CD8-positive, alpha-beta T cell (primary cell): ENCODE measurements at regions of chr13 and their contacts with region 1.

Region 1: DNA sequence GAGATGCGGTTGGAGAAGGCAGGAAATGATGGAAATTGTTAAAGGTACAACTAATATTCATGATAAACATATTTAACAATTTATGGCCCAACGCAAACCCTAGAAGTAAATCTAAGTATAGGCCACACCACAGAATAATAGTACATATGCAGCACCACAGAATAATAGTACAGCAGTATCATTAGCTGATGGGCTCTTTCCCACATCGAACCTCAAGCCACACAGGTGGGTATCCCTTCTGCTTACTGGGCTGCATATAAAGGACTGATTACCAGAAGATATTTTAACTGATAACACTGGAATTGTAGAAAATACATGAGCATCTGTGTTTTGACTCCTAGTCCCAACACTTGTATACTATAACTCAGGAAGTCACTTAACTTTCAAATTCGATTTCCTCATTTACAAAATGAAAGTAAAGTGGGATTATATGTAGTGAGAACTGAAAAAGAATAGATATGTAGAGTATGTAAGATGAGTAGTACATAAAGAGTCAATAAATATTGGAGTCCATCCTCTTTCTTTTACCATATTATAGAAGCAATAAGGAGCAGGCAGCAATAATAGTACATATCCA is 91.5 kb downstream of the TSC22D1 start:
- DNase-seq: peak in 2 of 9 experiments; percentile 2 to 31
- ATAC-seq: no peak
- H3K4me3 ChIP-seq: peak overlapping the region in 1 of 2 experiments; percentile 23
- H3K4me3 Mint-ChIP-seq: peak overlapping the region; percentile 59
- H3K27ac ChIP-seq: peak overlapping the region in 1 of 2 experiments; percentile 5
- H3K27ac Mint-ChIP-seq: peak overlapping the region; percentile 42
- H3K4me1 ChIP-seq: peaks cover 10% of the 10 kb centered on the region
- H3K4me1 Mint-ChIP-seq: peaks cover 13% of the 10 kb centered on the region
- H3K27me3 ChIP-seq: no peaks in the 10 kb centered on the region
- H3K27me3 Mint-ChIP-seq: no peaks in the 10 kb centered on the region
- CTCF ChIP-seq: no peak

Region 2: DNA sequence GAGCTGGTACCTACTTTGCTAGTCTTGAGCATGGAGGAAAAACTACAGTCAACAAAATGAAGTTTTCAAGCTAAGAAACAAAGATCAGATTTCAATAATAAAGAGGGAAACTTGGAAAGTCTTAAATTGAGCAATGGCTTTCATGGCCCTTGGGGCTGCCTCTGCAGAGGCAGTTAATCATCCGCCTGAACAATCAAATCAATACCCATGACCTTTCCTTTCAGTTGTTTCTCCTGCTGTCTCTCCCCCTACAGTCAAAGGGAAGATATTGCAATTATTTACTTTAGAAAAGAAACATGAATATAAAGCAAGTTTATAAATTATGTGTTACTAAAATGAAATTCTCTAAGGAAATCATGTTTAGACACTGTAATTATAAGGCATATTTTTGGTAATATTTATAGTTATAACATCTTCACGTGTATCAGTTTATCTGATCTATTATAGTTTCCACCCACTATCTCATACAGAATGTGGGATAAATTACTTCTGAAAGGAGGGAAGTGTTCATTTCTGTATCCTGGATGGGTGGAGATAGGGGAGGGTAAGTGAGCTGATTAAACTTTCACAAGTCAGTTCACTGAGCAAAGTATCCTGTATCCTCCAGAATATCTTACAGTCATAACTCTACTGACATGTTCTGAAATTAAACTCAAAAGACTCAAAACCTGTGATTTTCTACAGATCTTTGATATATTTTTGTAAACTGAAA is 163.9 kb after region 1 on chr13:
- CTCF ChIA-PET with region 1: interaction called, 14 read pairs
- POLR2A ChIA-PET with region 1: no interaction called
- intact Hi-C with region 1: loop called (anchors 1 to 2 kb)
- DNase-seq: peak in 2 of 9 experiments; percentile 8 to 12
- ATAC-seq: no peak
- H3K4me3 ChIP-seq: no peak overlapping the region
- H3K4me3 Mint-ChIP-seq: no peak overlapping the region
- H3K27ac ChIP-seq: no peak overlapping the region
- H3K27ac Mint-ChIP-seq: no peak overlapping the region
- H3K4me1 ChIP-seq: no peaks in the 10 kb centered on the region
- H3K4me1 Mint-ChIP-seq: no peaks in the 10 kb centered on the region
- H3K27me3 ChIP-seq: no peaks in the 10 kb centered on the region
- H3K27me3 Mint-ChIP-seq: peaks cover 8% of the 10 kb centered on the region
- CTCF ChIP-seq: peak; percentile 51

Region 3: DNA sequence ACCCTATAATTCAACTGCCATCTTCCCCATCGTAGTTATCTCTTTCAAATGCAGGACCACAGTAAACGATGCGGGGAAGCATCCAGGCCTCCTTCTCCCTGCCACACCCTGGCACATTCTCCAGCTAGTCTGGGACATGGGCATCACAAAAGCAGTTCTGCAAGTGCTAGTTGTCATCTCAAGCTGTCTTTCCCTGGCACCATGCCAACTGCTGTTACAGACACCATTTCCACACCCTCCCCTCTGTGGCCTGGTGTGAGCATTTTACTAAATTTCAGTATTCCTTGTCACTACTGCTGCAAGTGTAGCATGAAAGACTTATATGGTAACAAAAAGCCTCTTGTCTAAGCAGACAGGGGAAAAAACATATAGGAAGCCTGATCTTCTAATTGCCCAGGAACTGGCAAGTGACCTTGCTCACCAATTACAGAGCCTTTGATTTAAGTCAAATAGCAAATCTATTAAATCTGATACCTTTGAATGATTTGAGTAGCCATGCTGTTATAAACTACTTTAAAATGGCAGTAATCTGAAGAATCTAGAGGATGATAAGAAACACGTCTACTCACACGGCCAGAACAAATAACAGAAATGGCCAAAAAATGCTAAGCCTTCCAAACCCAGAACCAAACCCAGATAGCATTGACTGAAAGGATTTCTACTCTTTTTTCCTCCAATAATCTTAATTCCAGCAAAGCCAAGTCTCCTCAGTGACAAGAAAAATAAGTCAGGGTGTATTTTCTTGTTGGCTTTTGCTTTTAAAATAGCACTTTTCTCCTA is 325.6 kb after region 1 on chr13:
- CTCF ChIA-PET with region 1: no interaction called
- POLR2A ChIA-PET with region 1: no interaction called
- intact Hi-C with region 1: no loop called
- DNase-seq: peak in 2 of 9 experiments; percentile 7 to 8
- ATAC-seq: no peak
- H3K4me3 ChIP-seq: no peak overlapping the region
- H3K4me3 Mint-ChIP-seq: no peak overlapping the region
- H3K27ac ChIP-seq: no peak overlapping the region
- H3K27ac Mint-ChIP-seq: no peak overlapping the region
- H3K4me1 ChIP-seq: no peaks in the 10 kb centered on the region
- H3K4me1 Mint-ChIP-seq: no peaks in the 10 kb centered on the region
- H3K27me3 ChIP-seq: no peaks in the 10 kb centered on the region
- H3K27me3 Mint-ChIP-seq: peaks cover 1% of the 10 kb centered on the region
- CTCF ChIP-seq: no peak

Region 4: GRCh38 chr13:44879463-44880058 is 394.9 kb after region 1 on chr13:
- CTCF ChIA-PET with region 1: interaction called, 3 read pairs
- POLR2A ChIA-PET with region 1: no interaction called
- intact Hi-C with region 1: loop called (anchors 1 to 5 kb)
- DNase-seq: peak in 2 of 9 experiments; percentile 14 to 31
- ATAC-seq: no peak
- H3K4me3 ChIP-seq: no peak overlapping the region
- H3K4me3 Mint-ChIP-seq: no peak overlapping the region
- H3K27ac ChIP-seq: no peak overlapping the region
- H3K27ac Mint-ChIP-seq: no peak overlapping the region
- H3K4me1 ChIP-seq: no peaks in the 10 kb centered on the region
- H3K4me1 Mint-ChIP-seq: no peaks in the 10 kb centered on the region
- H3K27me3 ChIP-seq: no peaks in the 10 kb centered on the region
- H3K27me3 Mint-ChIP-seq: peaks cover 8% of the 10 kb centered on the region
- CTCF ChIP-seq: no peak

Region 5: DNA sequence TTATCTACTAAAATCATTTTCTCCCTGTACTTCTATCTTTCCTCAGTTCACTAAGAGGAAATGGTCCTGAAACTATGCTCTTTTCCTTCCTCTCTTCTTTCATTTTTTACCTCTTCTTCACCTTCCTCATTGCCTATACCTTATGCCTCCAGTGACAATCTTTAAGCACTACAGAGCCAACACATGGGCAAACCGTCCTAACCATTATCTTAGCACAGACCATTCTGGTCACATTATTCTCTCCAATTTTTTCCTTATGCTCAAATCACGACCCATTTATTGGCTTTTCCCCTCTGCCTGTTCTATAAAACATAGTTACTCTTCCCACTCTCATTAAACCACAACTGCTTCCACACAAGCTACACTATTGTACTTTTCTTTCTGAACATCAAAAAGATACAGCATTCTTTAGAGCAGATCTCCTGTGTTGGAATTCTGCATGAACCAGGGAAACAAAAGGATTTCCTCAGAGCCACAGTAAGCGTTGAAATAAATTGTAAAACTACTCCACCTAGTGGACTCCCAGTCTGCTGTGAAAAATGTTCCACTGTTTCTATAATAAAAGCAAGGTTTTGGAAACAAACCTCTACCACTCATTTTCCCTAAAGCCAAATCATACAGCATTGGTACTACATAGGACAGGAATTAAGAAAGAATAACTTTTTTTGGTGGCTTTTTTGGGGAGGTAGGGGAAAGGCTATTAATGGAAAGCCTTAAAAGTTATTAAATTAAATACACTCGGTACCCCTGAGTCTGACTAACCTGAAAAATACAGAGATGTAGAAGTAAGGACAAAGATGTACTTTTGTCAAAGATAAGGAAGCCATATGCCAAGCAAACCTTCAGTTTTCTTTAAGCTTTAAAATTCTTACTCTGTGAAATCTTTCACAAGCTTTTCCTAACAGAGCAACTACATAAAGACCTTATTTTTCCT is 485.2 kb after region 1 on chr13:
- CTCF ChIA-PET with region 1: interaction called, 36 read pairs
- POLR2A ChIA-PET with region 1: no interaction called
- intact Hi-C with region 1: loop called (anchors 1 kb)
- DNase-seq: peak in 2 of 9 experiments; percentile 32 to 50
- ATAC-seq: no peak
- H3K4me3 ChIP-seq: no peak overlapping the region
- H3K4me3 Mint-ChIP-seq: no peak overlapping the region
- H3K27ac ChIP-seq: no peak overlapping the region
- H3K27ac Mint-ChIP-seq: no peak overlapping the region
- H3K4me1 ChIP-seq: no peaks in the 10 kb centered on the region
- H3K4me1 Mint-ChIP-seq: no peaks in the 10 kb centered on the region
- H3K27me3 ChIP-seq: no peaks in the 10 kb centered on the region
- H3K27me3 Mint-ChIP-seq: no peaks in the 10 kb centered on the region
- CTCF ChIP-seq: peak; percentile 67

Region 6: GRCh38 chr13:45297456-45298205 is 813.0 kb after region 1 on chr13:
- CTCF ChIA-PET with region 1: no interaction called
- POLR2A ChIA-PET with region 1: no interaction called
- intact Hi-C with region 1: loop called in 1 of 2 experiments (anchors 10 kb)
- DNase-seq: peak in 3 of 9 experiments; percentile 13 to 60 (median 32)
- ATAC-seq: peak; percentile 81
- H3K4me3 ChIP-seq: no peak overlapping the region
- H3K4me3 Mint-ChIP-seq: peak overlapping the region; percentile 9
- H3K27ac ChIP-seq: peak overlapping the region in 1 of 2 experiments; percentile 55
- H3K27ac Mint-ChIP-seq: peak overlapping the region; percentile 81
- H3K4me1 ChIP-seq: peaks cover 29% of the 10 kb centered on the region
- H3K4me1 Mint-ChIP-seq: peaks cover 41% of the 10 kb centered on the region
- H3K27me3 ChIP-seq: no peaks in the 10 kb centered on the region
- H3K27me3 Mint-ChIP-seq: no peaks in the 10 kb centered on the region
- CTCF ChIP-seq: no peak